ENCODE measurements at regions of chr18 and their contacts with region 1.

Region 1: GRCh38 chr18:21452796-21453510 is 147.6 kb downstream of the ESCO1 start:
- DNase-seq: no peak
- H3K4me3 ChIP-seq: no peak overlapping the region
- H3K27ac ChIP-seq: peak overlapping the region; percentile 54 to 60
- H3K4me1 ChIP-seq: peaks cover 0 to 8% of the 10 kb centered on the region in 2 donors
- H3K27me3 ChIP-seq: no peaks in the 10 kb centered on the region
- CTCF ChIP-seq: no peak

Region 2: DNA sequence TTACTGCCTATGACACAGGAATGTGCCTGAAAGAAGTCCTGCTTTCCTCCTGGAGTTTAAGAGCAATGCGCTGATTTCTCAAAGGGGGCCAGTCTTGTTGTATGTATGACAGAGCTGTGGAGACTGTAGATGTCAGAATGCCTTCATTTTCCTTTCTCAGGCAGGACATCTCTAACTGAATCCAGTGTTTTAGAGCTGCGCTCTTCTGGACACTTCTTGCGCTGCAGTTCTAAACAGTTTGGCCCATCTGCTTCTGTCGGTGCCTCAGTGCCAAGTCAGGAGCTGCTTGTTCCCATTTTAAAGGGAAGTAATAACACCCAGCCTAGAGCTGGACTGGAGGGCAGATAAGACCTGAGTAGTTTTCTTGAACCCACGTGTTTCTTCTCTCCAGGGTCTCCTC is 56.1 kb after region 1 on chr18:
- intact Hi-C with region 1: no loop called
- DNase-seq: no peak
- H3K4me3 ChIP-seq: no peak overlapping the region
- H3K27ac ChIP-seq: no peak overlapping the region
- H3K4me1 ChIP-seq: no peaks in the 10 kb centered on the region
- H3K27me3 ChIP-seq: no peaks in the 10 kb centered on the region
- CTCF ChIP-seq: no peak

Region 3: DNA sequence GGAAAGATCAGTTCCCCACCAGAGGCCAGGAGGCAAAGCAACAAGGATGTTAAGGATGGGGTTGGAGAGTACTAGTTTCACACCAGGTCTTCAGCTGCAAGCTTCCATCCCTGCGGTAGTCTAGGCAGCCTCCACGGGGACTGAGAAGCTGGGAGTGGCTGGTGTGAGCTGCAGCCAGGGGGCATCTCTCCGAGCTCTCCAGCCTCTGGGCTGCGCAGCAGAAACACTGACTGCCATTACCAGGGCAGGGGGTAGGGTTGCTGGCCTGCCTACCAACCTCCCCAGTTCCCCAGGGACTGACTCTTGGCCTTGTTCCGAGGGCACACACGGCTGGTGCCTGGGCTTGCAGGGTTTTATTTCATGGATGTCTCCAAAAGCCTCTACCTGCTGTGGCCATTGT is 732.3 kb after region 1 on chr18:
- intact Hi-C with region 1: loop called (anchors 10 kb)
- DNase-seq: no peak
- H3K4me3 ChIP-seq: peak overlapping the region in 1 of 2 donors; percentile 39
- H3K27ac ChIP-seq: peak overlapping the region; percentile 89 to 97
- H3K4me1 ChIP-seq: peaks cover 22 to 80% of the 10 kb centered on the region in 2 donors
- H3K27me3 ChIP-seq: no peaks in the 10 kb centered on the region
- CTCF ChIP-seq: peak; percentile 36 to 46 (median 36)

Measured in ascending aorta (tissue), 2 donors.